A673 (cell line): ENCODE measurements at regions of chr15 and their contacts with region 1.

Region 1: GRCh38 chr15:90886041-90886614 is 1.8 kb downstream of the FES start:
- DNase-seq: peak; percentile 80
- H3K4me3 ChIP-seq: no peak overlapping the region
- H3K27ac ChIP-seq: no peak overlapping the region
- H3K4me1 ChIP-seq: no peaks in the 10 kb centered on the region
- H3K27me3 ChIP-seq: no peaks in the 10 kb centered on the region
- CTCF ChIP-seq: peak; percentile 98

Region 2: GRCh38 chr15:90320061-90320884 is 565.9 kb before region 1 on chr15:
- CTCF ChIA-PET with region 1: interaction called, 4 read pairs
- POLR2A ChIA-PET with region 1: no interaction called
- intact Hi-C with region 1: loop called (anchors 1 kb)
- DNase-seq: peak; percentile 93
- H3K4me3 ChIP-seq: no peak overlapping the region
- H3K27ac ChIP-seq: no peak overlapping the region
- H3K4me1 ChIP-seq: peaks cover 7% of the 10 kb centered on the region
- H3K27me3 ChIP-seq: no peaks in the 10 kb centered on the region
- CTCF ChIP-seq: peak; percentile 99

Region 3: GRCh38 chr15:90489514-90489913 is 396.6 kb before region 1 on chr15:
- CTCF ChIA-PET with region 1: no interaction called
- POLR2A ChIA-PET with region 1: no interaction called
- intact Hi-C with region 1: loop called (anchors 5 kb)
- DNase-seq: no peak
- H3K4me3 ChIP-seq: no peak overlapping the region
- H3K27ac ChIP-seq: no peak overlapping the region
- H3K4me1 ChIP-seq: no peaks in the 10 kb centered on the region
- H3K27me3 ChIP-seq: no peaks in the 10 kb centered on the region
- CTCF ChIP-seq: no peak

Region 4: DNA sequence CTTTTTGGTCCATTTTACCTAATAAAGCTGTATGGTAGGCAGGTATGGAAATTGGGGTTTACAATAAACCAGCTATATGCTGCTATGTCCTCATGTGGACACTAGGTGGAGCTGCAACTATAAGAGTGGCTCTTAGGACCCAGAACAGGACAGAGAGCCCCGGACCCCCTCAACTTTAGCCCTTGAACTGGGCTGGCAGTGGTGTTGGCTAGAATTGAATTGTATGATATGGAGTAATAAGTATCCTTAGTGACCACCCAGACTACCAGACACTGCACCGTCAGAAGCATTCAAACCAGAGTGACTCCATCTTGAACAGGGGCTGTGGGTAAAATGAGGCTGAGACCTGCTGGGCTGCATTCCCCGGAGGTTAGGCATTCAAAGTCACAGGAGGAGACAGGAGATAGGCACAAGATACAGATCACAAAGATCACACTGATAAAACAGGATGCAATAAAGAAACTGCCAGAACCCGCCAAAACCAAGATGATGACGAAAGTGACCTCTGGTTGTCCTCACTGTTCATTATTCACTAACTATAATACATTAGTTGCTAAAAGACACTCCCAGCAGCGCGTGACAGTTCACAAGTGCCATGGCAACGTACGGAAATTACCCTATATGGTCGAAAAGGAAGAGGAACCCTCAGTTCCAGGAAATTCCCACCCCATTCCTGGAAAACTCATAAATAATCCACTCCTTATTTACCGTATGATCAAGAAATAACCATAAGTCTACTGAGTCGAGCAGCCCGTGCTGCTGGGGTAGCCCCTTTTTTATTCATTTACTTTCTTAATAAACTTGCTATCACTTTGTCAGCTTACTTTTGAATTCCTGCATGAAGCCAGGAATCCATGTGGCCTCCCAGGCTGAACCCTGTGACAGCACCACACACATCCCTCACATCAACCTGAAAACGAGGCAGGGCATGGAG is 237.7 kb before region 1 on chr15:
- CTCF ChIA-PET with region 1: interaction called, 17 read pairs
- POLR2A ChIA-PET with region 1: no interaction called
- intact Hi-C with region 1: loop called (anchors 1 kb)
- DNase-seq: peak; percentile 84
- H3K4me3 ChIP-seq: no peak overlapping the region
- H3K27ac ChIP-seq: peak overlapping the region; percentile 80
- H3K4me1 ChIP-seq: peaks cover 29% of the 10 kb centered on the region
- H3K27me3 ChIP-seq: no peaks in the 10 kb centered on the region
- CTCF ChIP-seq: peak; percentile 91

Region 5: GRCh38 chr15:90706394-90707327 is 179.5 kb before region 1 on chr15:
- CTCF ChIA-PET with region 1: no interaction called
- POLR2A ChIA-PET with region 1: no interaction called
- intact Hi-C with region 1: loop called (anchors 5 kb)
- DNase-seq: peak; percentile 95
- H3K4me3 ChIP-seq: no peak overlapping the region
- H3K27ac ChIP-seq: peak overlapping the region; percentile 63
- H3K4me1 ChIP-seq: peaks cover 24% of the 10 kb centered on the region
- H3K27me3 ChIP-seq: no peaks in the 10 kb centered on the region
- CTCF ChIP-seq: no peak

Region 6: GRCh38 chr15:90869601-90870353 is 16.4 kb before region 1 on chr15:
- CTCF ChIA-PET with region 1: interaction called, 17 read pairs
- POLR2A ChIA-PET with region 1: no interaction called
- intact Hi-C with region 1: no loop called
- DNase-seq: peak; percentile 94
- H3K4me3 ChIP-seq: no peak overlapping the region
- H3K27ac ChIP-seq: peak overlapping the region; percentile 90
- H3K4me1 ChIP-seq: peaks cover 45% of the 10 kb centered on the region
- H3K27me3 ChIP-seq: no peaks in the 10 kb centered on the region
- CTCF ChIP-seq: no peak